Aorta (tissue), 5 donors: ENCODE measurements at regions of chr10 and their contacts with region 1.

Region 1: GRCh38 chr10:42638055-42638820 is at the start of gene ZNF33B:
- DNase-seq: peak; percentile 97
- ATAC-seq: peak; percentile 98
- H3K4me3 ChIP-seq: peak within 1 kb of the TSS; percentile 75 to 84
- H3K27ac ChIP-seq: peak within 1 kb of the TSS in 1 of 2 donors; percentile 58
- H3K4me1 ChIP-seq: no peaks in the 10 kb centered on the region
- H3K27me3 ChIP-seq: no peaks in the 10 kb centered on the region
- total RNA-seq, gene ZNF33B: 15.7 to 21.0 TPM

Region 2: GRCh38 chr10:42552493-42553407 is 85.5 kb before region 1 on chr10:
- intact Hi-C with region 1: loop called (anchors 2 to 5 kb)
- DNase-seq: peak; percentile 98
- ATAC-seq: peak; percentile 99
- H3K4me3 ChIP-seq: peak overlapping the region; percentile 44 to 86
- H3K27ac ChIP-seq: peak overlapping the region in 1 of 2 donors; percentile 62
- H3K4me1 ChIP-seq: no peaks in the 10 kb centered on the region
- H3K27me3 ChIP-seq: no peaks in the 10 kb centered on the region

Region 3: GRCh38 chr10:42722575-42722974 is 84.3 kb after region 1 on chr10:
- intact Hi-C with region 1: no loop called
- DNase-seq: no peak
- ATAC-seq: no peak
- H3K4me3 ChIP-seq: no peak overlapping the region
- H3K27ac ChIP-seq: no peak overlapping the region
- H3K4me1 ChIP-seq: no peaks in the 10 kb centered on the region
- H3K27me3 ChIP-seq: no peaks in the 10 kb centered on the region